ENCODE measurements at regions of chr16 and their contacts with region 1.

Region 1: DNA sequence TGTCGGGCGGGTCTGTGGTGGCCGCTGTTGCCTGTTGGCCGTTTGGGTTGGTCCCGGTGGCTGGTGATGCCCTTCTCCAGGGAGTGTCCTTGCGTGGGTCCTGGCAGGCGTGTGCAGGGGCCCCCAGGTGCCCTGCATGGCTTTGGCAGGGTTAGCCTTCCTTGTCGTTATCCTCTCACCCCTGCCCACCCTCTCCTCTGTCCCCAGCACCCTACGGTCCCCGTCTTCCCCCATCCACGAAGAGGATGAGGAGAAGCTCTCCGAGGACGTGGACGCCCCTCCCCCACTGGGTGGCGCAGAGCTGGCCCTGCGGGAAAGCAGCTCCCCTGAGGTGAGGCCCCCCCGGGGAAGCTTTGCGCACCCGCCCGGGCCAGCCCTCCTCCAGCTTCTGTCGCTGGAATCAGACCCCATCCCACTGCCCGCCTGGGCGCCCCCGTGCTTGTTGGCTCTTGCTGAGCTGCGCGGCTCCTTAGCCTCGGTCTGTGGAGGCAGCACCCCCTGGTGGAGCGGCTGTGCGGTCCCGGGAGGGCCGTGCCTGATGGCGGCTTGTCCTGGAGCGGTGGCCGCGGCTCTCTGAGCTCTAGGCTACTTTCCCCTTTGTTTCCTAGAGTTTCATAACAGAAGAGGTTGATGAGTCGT is 10.6 kb upstream of the NUDT16L1 start:
- DNase-seq: peak; percentile 54 to 86 (median 74)

Region 2: GRCh38 chr16:4624015-4624826 is 58.5 kb before region 1 on chr16 and contains the start of gene MGRN1:
- intact Hi-C with region 1: loop called (anchors 5 kb)
- DNase-seq: peak; percentile 87 to 99 (median 96)

Region 3: DNA sequence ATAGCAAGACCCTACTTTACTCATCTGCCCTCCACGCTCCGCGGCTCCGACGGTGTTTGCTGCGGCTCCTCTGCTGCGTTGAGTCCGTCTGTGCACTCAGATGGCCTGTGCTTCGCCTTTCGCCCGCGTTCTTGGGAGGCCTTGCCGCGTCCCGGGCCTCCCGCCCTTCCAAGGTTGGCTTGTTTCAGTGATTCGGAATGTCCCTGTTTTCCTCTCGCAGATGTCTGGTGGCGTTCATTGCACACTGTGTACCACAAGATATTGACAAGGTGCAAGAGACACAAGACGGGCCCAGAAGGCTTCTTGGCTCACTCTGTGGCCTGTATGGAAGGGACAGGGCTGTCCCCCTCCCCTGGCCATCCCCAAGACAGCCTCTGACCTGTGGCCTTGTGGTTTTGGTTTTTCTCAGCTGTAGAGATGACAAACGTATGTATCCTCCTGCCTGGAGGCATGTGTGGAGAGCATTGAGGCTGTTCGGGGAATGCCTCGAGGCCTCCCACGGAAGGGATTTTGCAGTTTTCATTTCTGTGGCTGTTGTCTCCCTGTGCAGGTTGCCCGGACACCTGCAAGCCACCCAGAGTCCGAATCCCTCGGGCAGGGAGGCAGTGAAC is 42.7 kb before region 1 on chr16:
- intact Hi-C with region 1: no loop called
- DNase-seq: no peak